ENCODE measurements at regions of chr1 and their contacts with region 1.

Region 1: GRCh38 chr1:153577624-153578051 is 12.0 kb upstream of the S100A2 start:
- DNase-seq: no peak
- ATAC-seq: peak in 4 of 8 donors; percentile 12 to 47 (median 24)
- H3K4me3 ChIP-seq: no peak overlapping the region
- H3K27ac ChIP-seq: no peak overlapping the region
- H3K4me1 ChIP-seq: peaks cover 0 to 10% (median 5%) of the 10 kb centered on the region in 9 donors
- H3K27me3 ChIP-seq: no peaks in the 10 kb centered on the region
- CTCF ChIP-seq: no peak

Region 2: GRCh38 chr1:153617675-153618074 is 40.0 kb after region 1 on chr1:
- intact Hi-C with region 1: loop called in 7 of 10 experiments (anchors 1 to 5 kb)
- DNase-seq: peak; percentile 77 to 84
- ATAC-seq: peak in 7 of 8 donors; percentile 37 to 87 (median 71)
- H3K4me3 ChIP-seq: no peak overlapping the region
- H3K27ac ChIP-seq: peak overlapping the region in 6 of 10 donors; percentile 14 to 70 (median 59)
- H3K4me1 ChIP-seq: peaks cover 5 to 30% (median 21%) of the 10 kb centered on the region in 9 donors
- H3K27me3 ChIP-seq: no peaks in the 10 kb centered on the region
- CTCF ChIP-seq: peak in 8 of 9 donors; percentile 40 to 92 (median 66)

Region 3: DNA sequence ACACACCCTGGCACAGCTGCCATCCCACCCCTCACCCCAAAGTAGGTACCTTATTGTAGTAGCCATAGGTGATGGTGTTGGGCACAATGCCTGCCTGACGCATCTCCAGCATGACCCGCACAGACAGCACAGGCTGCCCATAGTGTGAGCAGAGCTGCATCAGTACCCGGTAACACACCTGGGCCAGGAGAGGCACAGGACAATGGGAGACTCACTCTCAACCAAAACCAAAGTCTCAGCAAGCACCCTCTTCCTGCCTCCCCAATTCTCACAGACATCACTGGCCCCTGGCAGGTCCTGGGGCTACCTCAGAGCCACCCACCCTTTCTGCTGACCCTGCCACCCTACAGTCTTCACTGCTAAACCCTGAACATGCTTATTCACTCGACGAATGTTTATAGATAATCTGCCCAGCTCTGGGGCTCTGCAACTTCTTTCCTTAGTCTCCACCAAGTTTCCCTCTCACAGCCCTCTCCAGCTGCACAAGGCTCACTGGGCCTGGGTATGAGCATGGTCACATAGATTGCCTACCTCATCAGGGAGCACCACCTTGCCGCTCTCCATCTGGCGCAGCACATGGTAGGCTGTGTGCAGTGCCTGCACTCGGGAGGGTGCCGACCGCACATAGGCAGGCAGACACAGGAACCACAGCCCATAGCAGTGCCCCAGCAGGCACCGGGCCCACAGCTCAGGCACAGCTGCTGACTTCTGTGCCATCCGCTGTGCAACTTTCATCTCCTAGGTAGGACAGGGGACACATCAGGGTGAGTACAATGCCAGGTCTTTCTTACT is 358.6 kb after region 1 on chr1:
- intact Hi-C with region 1: no loop called
- DNase-seq: no peak
- ATAC-seq: no peak
- H3K4me3 ChIP-seq: no peak overlapping the region
- H3K27ac ChIP-seq: no peak overlapping the region
- H3K4me1 ChIP-seq: no peaks in the 10 kb centered on the region
- H3K27me3 ChIP-seq: no peaks in the 10 kb centered on the region
- CTCF ChIP-seq: no peak

Measured in heart right ventricle (tissue), 16 donors.